Heart right ventricle (tissue), 16 donors: ENCODE measurements at regions of chr5 and their contacts with region 1.

Region 1: GRCh38 chr5:61162010-61162831 is at the start of gene SMIM15:
- DNase-seq: peak; percentile 89 to 90
- ATAC-seq: peak; percentile 98 to 99 (median 99)
- H3K4me3 ChIP-seq: peak within 1 kb of the TSS; percentile 65 to 99 (median 92)
- H3K27ac ChIP-seq: peak within 1 kb of the TSS; percentile 80 to 97 (median 94)
- H3K4me1 ChIP-seq: peaks cover 0 to 46% (median 22%) of the 10 kb centered on the region in 9 donors
- H3K27me3 ChIP-seq: no peaks in the 10 kb centered on the region
- CTCF ChIP-seq: no peak
- total RNA-seq, gene SMIM15: 18.8 to 26.1 (median 22.6) TPM

Region 2: DNA sequence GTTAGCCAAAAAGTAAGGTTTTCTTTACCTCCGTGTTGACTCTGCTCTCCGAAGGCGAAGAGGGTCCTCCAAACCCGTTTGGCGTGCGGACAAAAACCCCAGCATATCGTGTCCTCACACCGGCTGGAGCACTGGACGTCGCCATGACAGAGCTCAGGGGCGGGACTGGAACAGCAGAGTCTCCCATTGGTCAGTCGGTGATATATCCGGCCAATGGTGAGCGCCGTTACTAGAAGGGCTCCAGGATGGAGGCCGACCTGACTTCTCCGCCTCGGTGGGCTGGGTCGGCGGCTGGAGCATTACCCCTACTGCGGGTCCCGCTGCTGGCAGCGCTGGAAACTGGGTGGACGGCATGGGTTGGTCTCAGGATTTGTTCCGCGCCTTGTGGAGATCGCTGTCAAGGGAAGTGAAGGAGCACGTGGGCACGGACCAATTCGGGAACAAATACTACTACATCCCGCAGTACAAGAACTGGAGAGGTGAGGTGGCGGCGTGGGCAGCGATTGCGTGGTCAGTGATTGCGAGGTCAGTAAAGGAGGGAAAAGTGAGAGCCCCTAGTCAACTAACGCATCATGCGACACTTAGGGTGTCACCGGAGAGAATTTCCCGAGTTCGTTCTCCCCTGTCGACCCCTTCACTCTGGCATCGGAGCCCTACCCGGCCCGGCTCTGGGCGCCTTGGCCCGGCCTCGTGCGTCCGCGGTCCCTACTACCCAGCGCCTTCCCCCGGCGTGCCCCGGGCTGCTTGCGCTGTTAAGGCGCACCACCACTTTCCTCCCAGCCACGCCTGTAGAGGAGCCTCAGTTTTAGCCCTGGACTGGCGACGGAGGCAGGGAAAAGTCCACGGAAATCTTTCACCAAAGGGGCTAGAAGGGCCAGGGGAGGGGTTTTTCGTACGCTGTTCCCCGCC is 217.1 kb before region 1 on chr5 and contains the starts of genes ERCC8 and NDUFAF2:
- intact Hi-C with region 1: loop called in 3 of 10 experiments (anchors 10 kb)
- DNase-seq: peak; percentile 85 to 92
- ATAC-seq: peak; percentile 99 to 100 (median 100)
- H3K4me3 ChIP-seq: peak within 1 kb of the TSS; percentile 62 to 88 (median 74)
- H3K27ac ChIP-seq: peak within 1 kb of the TSS; percentile 23 to 86 (median 81)
- H3K4me1 ChIP-seq: peaks cover 6 to 32% (median 23%) of the 10 kb centered on the region in 9 donors
- H3K27me3 ChIP-seq: no peaks in the 10 kb centered on the region
- CTCF ChIP-seq: no peak
- total RNA-seq, gene ERCC8: 4.1 to 8.3 (median 6.8) TPM
- total RNA-seq, gene NDUFAF2: 23.0 to 49.2 (median 29.9) TPM

Region 3: GRCh38 chr5:61319388-61320146 is 157.3 kb after region 1 on chr5:
- intact Hi-C with region 1: loop called in 1 of 10 experiments (anchors 10 kb)
- DNase-seq: no peak
- ATAC-seq: peak; percentile 51 to 79 (median 62)
- H3K4me3 ChIP-seq: peak overlapping the region in 3 of 10 donors; percentile 2 to 22 (median 22)
- H3K27ac ChIP-seq: peak overlapping the region in 5 of 10 donors; percentile 6 to 85 (median 49)
- H3K4me1 ChIP-seq: peaks cover 0 to 62% (median 6%) of the 10 kb centered on the region in 9 donors
- H3K27me3 ChIP-seq: no peaks in the 10 kb centered on the region
- CTCF ChIP-seq: no peak

Region 4: GRCh38 chr5:61658592-61659008 is 496.4 kb after region 1 on chr5:
- intact Hi-C with region 1: loop called in 8 of 10 experiments (anchors 5 to 10 kb)
- DNase-seq: peak; percentile 88
- ATAC-seq: peak; percentile 82 to 95 (median 92)
- H3K4me3 ChIP-seq: peak overlapping the region in 6 of 10 donors; percentile 1 to 35 (median 27)
- H3K27ac ChIP-seq: peak overlapping the region in 6 of 10 donors; percentile 25 to 62 (median 40)
- H3K4me1 ChIP-seq: peaks cover 0 to 8% (median 0%) of the 10 kb centered on the region in 9 donors
- H3K27me3 ChIP-seq: no peaks in the 10 kb centered on the region
- CTCF ChIP-seq: peak; percentile 88 to 97 (median 93)

Region 5: GRCh38 chr5:61817472-61818326 is 655.5 kb after region 1 on chr5:
- intact Hi-C with region 1: loop called in 1 of 10 experiments (anchors 10 kb)
- DNase-seq: peak in 1 of 2 donors; percentile 29
- ATAC-seq: peak in 4 of 8 donors; percentile 51 to 74 (median 60)
- H3K4me3 ChIP-seq: no peak overlapping the region
- H3K27ac ChIP-seq: no peak overlapping the region
- H3K4me1 ChIP-seq: peaks cover 0 to 9% (median 0%) of the 10 kb centered on the region in 9 donors
- H3K27me3 ChIP-seq: peaks cover 0 to 37% (median 16%) of the 10 kb centered on the region in 7 donors
- CTCF ChIP-seq: peak in 8 of 9 donors; percentile 21 to 72 (median 62)